ENCODE measurements at regions of chr15 and their contacts with region 1.

Region 1: GRCh38 chr15:50424066-50424890 is at the start of gene USP8:
- DNase-seq: peak; percentile 90
- ATAC-seq: peak; percentile 98
- H3K4me3 Mint-ChIP-seq: peak within 1 kb of the TSS; percentile 90
- H3K27ac Mint-ChIP-seq: peak within 1 kb of the TSS; percentile 89
- H3K4me1 Mint-ChIP-seq: peaks cover 44% of the 10 kb centered on the region
- H3K27me3 Mint-ChIP-seq: no peaks in the 10 kb centered on the region
- CTCF ChIP-seq: no peak
- total RNA-seq, gene USP8: 71.3 and 78.3 TPM in 2 replicates

Region 2: DNA sequence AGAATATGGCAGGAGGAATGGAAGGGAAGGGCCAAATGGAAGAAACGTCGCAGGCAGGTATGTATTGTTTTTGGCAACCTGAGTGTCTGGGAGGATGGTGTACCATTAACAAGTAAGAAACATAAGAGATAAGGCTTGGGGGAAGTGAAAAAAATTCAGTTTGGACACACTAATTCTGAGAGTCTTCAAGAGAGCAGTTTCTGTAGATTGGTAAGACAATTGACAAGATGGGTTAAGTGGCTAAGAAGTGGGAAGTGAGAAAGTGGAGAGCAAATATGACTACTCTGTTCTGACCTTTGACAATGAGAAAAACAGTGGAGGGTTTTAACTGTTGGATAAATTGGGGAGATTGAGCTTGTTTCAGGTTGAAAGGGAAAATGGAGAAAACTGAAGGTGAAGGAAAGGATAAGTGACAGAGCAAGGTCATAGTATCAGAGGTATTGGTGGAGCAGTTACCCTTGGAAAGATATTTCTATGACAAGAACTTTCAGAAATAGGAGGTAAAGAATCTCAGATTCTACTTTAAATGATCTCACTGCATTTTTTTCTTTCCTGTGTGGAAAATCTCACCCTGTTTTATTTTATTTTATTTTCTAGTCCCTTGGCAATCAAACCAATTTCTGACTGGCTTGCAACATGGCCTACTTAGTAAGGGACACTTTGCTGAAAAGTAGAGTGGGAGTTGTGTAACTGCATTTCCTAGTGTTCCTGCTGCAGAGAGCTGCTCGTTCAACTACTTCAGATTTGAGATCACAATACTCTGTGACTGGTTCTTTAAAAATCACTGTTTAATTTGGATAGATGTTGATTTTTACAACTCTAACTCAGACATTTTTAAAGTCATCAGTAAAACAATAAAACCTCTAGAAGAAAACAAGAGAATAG is 46.2 kb before region 1 on chr15:
- CTCF ChIA-PET with region 1: no interaction called
- POLR2A ChIA-PET with region 1: interaction called, 4 read pairs
- intact Hi-C with region 1: loop called (anchors 1 kb)
- DNase-seq: no peak
- ATAC-seq: peak; percentile 87
- H3K4me3 Mint-ChIP-seq: peak overlapping the region; percentile 28
- H3K27ac Mint-ChIP-seq: peak overlapping the region; percentile 77
- H3K4me1 Mint-ChIP-seq: peaks cover 17% of the 10 kb centered on the region
- H3K27me3 Mint-ChIP-seq: no peaks in the 10 kb centered on the region
- CTCF ChIP-seq: no peak

Region 3: DNA sequence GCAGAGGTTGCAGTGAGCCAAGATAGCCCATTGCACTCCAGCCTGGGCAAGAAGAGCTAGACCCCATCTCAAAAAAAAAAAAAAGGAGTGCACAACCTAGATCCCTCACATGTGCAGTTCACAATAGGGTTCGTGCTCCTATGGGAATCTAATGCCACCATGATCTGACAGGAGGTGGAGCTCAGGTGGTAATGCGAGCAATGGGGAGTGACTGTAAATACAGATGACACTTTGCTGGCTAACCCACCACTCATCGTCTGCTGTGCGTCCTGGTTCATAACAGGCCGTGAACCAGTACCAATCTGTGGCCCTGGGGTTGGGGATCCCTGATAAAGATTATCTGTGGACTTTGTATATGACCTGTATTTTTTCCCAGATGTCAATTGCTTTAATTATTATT is 16.7 kb after region 1 on chr15:
- CTCF ChIA-PET with region 1: no interaction called
- POLR2A ChIA-PET with region 1: interaction called, 17 read pairs
- intact Hi-C with region 1: loop called (anchors 1 kb)
- DNase-seq: no peak
- ATAC-seq: no peak
- H3K4me3 Mint-ChIP-seq: no peak overlapping the region
- H3K27ac Mint-ChIP-seq: no peak overlapping the region
- H3K4me1 Mint-ChIP-seq: peaks cover 30% of the 10 kb centered on the region
- H3K27me3 Mint-ChIP-seq: no peaks in the 10 kb centered on the region
- CTCF ChIP-seq: no peak

Region 4: DNA sequence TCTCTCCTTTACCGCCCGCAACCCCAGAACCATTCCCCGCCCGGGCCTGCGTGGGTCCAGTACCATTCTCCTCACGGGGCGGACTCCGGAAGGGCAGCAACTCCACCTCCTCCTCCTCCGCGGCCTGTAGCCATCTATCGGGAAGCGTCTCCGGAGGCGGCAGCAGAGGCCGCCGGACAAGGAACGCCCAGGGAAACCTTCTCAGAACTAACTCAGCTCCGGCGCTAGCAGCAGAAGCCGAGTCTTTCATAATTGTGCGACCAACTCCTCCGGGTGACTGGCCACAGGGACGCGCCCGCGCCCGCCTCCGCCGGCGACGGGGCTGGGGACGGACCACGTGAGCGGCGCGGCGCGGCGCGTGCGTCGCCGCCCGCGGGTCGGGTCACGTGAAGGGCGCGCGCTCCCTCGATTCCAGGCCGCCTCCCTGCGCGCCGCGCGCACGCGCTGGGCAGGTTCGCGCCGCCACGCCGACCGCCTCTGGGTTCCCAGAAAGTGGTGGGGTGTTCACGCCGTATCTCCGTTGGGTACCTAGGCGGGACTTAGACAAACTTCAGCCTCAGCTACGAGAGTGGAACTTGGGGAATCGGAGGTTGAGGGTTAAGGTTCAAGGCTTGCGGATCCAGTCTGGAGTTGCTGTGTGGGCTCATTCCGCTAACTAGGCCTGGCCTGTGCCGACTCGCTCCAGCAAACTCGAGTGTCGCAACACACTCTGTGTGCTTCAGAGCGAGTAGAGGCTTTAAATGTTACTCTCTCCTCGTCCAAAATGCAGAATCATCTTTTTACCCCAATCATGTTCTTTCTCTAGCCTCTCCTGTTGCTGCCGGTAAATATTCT is 262.4 kb after region 1 on chr15 and contains the start of gene TRPM7:
- CTCF ChIA-PET with region 1: no interaction called
- POLR2A ChIA-PET with region 1: interaction called, 4 read pairs
- intact Hi-C with region 1: loop called (anchors 2 kb)
- DNase-seq: peak; percentile 92
- ATAC-seq: peak; percentile 80
- H3K4me3 Mint-ChIP-seq: peak within 1 kb of the TSS; percentile 99
- H3K27ac Mint-ChIP-seq: peak within 1 kb of the TSS; percentile 92
- H3K4me1 Mint-ChIP-seq: peaks cover 58% of the 10 kb centered on the region
- H3K27me3 Mint-ChIP-seq: no peaks in the 10 kb centered on the region
- CTCF ChIP-seq: no peak
- total RNA-seq, gene TRPM7: 59.4 and 64.7 TPM in 2 replicates